ENCODE measurements at regions of chr15 and their contacts with region 1.

Region 1: DNA sequence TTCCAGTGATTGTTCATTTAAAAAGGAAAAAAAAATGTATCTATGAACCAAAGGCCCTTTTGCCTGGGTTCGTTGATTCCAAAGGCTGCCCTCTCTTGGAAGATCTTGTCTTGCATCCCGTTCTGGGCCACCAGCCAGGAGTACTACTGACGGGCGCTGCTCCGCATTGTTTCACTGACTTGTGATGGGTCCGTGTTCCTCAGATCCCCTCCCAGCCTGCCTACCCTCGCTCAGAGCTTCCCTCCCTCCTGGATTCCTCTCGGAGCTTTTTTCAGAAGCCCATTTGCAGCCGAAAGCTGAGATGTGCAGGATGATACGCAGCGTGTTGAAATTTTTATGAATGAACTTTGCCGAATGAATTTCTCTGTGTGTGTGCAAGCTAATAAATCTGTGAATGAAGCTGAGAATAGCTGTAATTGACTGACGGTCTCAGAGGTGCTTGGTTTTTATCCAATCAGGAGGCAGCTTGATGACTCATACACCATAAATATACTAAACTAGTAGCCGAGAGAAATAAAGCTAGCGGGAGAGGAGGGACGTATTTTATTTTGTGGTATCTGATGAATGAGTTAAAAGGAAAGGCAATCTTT is at the start of gene SHC4:
- DNase-seq: peak; percentile 37
- H3K4me3 Mint-ChIP-seq: peak within 1 kb of the TSS; percentile 70
- H3K27ac Mint-ChIP-seq: peak within 1 kb of the TSS; percentile 67
- H3K4me1 Mint-ChIP-seq: peaks cover 33% of the 10 kb centered on the region
- H3K27me3 Mint-ChIP-seq: no peaks in the 10 kb centered on the region
- CTCF ChIP-seq: no peak
- total RNA-seq, gene SHC4: 1.2 and 1.9 TPM in 2 replicates

Region 2: DNA sequence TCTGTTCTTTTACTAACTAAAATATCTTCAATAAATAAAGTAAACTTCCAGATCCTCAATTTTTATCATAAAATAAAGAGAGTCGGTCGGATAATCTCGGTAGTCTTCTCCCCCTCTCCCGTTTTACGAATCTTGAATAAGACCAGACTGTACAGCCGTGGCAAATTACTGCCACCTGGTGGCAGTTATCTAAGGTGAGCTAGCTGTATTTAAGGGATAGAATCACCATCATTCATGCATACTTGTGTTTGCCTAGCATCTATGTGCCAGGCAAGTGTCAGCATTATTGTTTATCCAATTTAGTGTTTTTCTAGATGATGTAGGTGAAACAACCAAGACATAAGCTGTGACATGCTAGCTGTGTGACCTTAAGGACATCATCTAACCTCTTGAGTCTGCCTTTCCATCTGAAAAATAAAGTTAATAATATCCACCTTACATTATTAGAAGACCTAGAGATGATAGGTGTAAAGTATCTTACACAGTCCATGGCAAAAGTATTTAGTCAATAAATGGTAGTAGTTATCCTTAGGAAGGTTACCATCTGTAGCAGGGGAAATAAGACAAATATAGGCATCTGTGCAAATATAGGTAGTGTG is 611.0 kb before region 1 on chr15:
- CTCF ChIA-PET with region 1: no interaction called
- intact Hi-C with region 1: loop called (anchors 10 kb)
- DNase-seq: peak; percentile 67
- H3K4me3 Mint-ChIP-seq: no peak overlapping the region
- H3K27ac Mint-ChIP-seq: no peak overlapping the region
- H3K4me1 Mint-ChIP-seq: peaks cover 17% of the 10 kb centered on the region
- H3K27me3 Mint-ChIP-seq: no peaks in the 10 kb centered on the region
- CTCF ChIP-seq: peak; percentile 31

Region 3: GRCh38 chr15:48946088-48946839 is 17.4 kb before region 1 on chr15:
- CTCF ChIA-PET with region 1: interaction called, 6 read pairs
- intact Hi-C with region 1: loop called (anchors 2 kb)
- DNase-seq: peak; percentile 66
- H3K4me3 Mint-ChIP-seq: no peak overlapping the region
- H3K27ac Mint-ChIP-seq: peak overlapping the region; percentile 95
- H3K4me1 Mint-ChIP-seq: peaks cover 21% of the 10 kb centered on the region
- H3K27me3 Mint-ChIP-seq: no peaks in the 10 kb centered on the region
- CTCF ChIP-seq: no peak

Region 4: GRCh38 chr15:48975472-48976419 is 12.1 kb after region 1 on chr15:
- CTCF ChIA-PET with region 1: interaction called, 15 read pairs
- intact Hi-C with region 1: no loop called
- DNase-seq: peak; percentile 84
- H3K4me3 Mint-ChIP-seq: peak overlapping the region; percentile 50
- H3K27ac Mint-ChIP-seq: no peak overlapping the region
- H3K4me1 Mint-ChIP-seq: peaks cover 7% of the 10 kb centered on the region
- H3K27me3 Mint-ChIP-seq: no peaks in the 10 kb centered on the region
- CTCF ChIP-seq: peak; percentile 84